ENCODE measurements at regions of chr12 and their contacts with region 1.

Region 1: GRCh38 chr12:50763639-50764285 is at the start of gene ATF1:
- DNase-seq: peak; percentile 96 to 98 (median 97)
- H3K4me3 ChIP-seq: peak within 1 kb of the TSS; percentile 68 to 97 (median 94)
- H3K27ac ChIP-seq: peak within 1 kb of the TSS; percentile 70 to 94
- H3K4me1 ChIP-seq: peaks cover 2 to 45% (median 34%) of the 10 kb centered on the region in 4 experiments
- H3K27me3 ChIP-seq: no peaks in the 10 kb centered on the region

Region 2: GRCh38 chr12:50715174-50715573 is 48.6 kb before region 1 on chr12:
- CTCF ChIA-PET with region 1: no interaction called
- POLR2A ChIA-PET with region 1: no interaction called
- DNase-seq: no peak
- H3K4me3 ChIP-seq: no peak overlapping the region
- H3K27ac ChIP-seq: no peak overlapping the region
- H3K4me1 ChIP-seq: no peaks in the 10 kb centered on the region
- H3K27me3 ChIP-seq: no peaks in the 10 kb centered on the region

Region 3: DNA sequence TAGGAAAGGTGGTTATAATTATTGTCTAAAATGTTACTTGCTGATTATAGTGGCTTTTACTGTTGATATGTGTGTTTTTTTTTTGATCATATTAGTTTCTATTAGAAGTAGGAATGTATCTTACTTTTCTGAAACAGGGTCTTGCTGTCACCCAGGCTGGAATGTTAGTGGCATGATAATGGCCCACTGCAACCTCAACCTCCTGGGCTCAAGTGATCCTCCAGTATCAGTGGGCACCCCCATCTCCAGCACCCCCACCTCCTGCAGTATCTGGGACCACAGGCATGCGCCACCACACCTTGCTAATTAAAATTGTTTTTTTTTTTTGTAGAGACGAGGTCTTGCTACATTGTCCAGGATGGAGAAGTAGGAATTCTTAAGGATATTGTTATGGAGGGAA is 11.5 kb after region 1 on chr12:
- CTCF ChIA-PET with region 1: interaction called, 12 read pairs
- POLR2A ChIA-PET with region 1: interaction called, 4 read pairs
- DNase-seq: peak in 1 of 3 donors; percentile 19
- H3K4me3 ChIP-seq: no peak overlapping the region
- H3K27ac ChIP-seq: no peak overlapping the region
- H3K4me1 ChIP-seq: no peaks in the 10 kb centered on the region
- H3K27me3 ChIP-seq: no peaks in the 10 kb centered on the region

Region 4: GRCh38 chr12:50825372-50825838 is 61.6 kb after region 1 on chr12:
- CTCF ChIA-PET with region 1: interaction called, 17 read pairs
- POLR2A ChIA-PET with region 1: interaction called, 3 read pairs
- DNase-seq: peak; percentile 78 to 86 (median 82)
- H3K4me3 ChIP-seq: peak overlapping the region in 1 of 7 experiments; percentile 34
- H3K27ac ChIP-seq: peak overlapping the region in 1 of 2 experiments; percentile 52
- H3K4me1 ChIP-seq: no peaks in the 10 kb centered on the region
- H3K27me3 ChIP-seq: no peaks in the 10 kb centered on the region

Region 5: GRCh38 chr12:50839042-50839441 is 75.3 kb after region 1 on chr12:
- CTCF ChIA-PET with region 1: no interaction called
- POLR2A ChIA-PET with region 1: no interaction called
- DNase-seq: no peak
- H3K4me3 ChIP-seq: no peak overlapping the region
- H3K27ac ChIP-seq: no peak overlapping the region
- H3K4me1 ChIP-seq: peaks cover 0 to 2% (median 0%) of the 10 kb centered on the region in 4 experiments
- H3K27me3 ChIP-seq: no peaks in the 10 kb centered on the region